A549 (cell line): ENCODE measurements at regions of chr2 and their contacts with region 1.

Region 1: GRCh38 chr2:20446917-20447436 is at the start of gene RHOB:
- DNase-seq: peak; percentile 99
- ATAC-seq: peak; percentile 76 to 85
- H3K4me3 ChIP-seq: peak within 1 kb of the TSS; percentile 90
- H3K27ac ChIP-seq: peak within 1 kb of the TSS; percentile 95 to 98
- H3K4me1 ChIP-seq: peaks cover 52% of the 10 kb centered on the region
- CTCF ChIP-seq: no peak
- EP300 ChIP-seq: no peak
- POLR2A ChIP-seq: peak; percentile 99
- RAD21 ChIP-seq: no peak; a peak in 1 of 5 replicates
- polyA plus RNA-seq, gene RHOB: 110 and 157 TPM in 2 replicates

Region 2: DNA sequence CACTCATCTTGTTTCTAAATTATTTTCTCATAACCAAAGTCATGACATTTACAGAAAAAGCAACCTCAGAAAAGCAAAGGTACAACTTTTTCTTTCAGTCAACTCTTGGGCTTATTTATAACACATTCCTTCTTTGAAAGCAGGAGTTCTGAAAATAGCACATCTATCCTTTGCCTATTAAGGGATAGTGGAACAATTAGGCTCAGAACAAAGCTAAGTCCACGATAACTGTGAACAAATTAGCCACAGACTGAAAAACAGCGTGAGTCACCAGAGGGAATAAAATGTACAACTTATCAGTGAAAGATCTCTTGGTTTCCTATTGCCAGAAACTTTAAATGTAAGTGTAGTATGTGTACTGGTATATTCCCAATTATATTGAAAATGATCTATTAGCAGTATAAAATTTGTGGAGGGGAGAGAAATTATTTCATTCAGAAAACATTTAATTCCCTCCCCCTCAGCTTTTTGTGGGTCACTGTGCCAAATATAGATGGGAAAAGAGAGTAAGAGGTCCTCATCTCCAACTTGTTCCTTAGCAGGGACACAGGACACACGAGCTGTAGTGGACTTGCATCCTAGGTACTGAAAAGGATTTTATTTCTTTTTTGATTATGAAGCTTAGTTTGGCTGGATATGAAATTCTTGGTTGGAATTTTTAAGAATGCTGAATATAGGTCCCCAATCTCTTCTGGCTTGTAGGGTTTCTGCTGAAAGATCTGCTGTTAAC is 419.1 kb before region 1 on chr2:
- CTCF ChIA-PET with region 1: no interaction called
- POLR2A ChIA-PET with region 1: no interaction called
- DNase-seq: no peak
- ATAC-seq: no peak
- H3K4me3 ChIP-seq: no peak overlapping the region
- H3K27ac ChIP-seq: peak overlapping the region; percentile 8 to 40; a peak in 4 of 6 replicates
- H3K4me1 ChIP-seq: peaks cover 13% of the 10 kb centered on the region
- CTCF ChIP-seq: no peak
- EP300 ChIP-seq: no peak
- POLR2A ChIP-seq: no peak
- RAD21 ChIP-seq: no peak

Region 3: DNA sequence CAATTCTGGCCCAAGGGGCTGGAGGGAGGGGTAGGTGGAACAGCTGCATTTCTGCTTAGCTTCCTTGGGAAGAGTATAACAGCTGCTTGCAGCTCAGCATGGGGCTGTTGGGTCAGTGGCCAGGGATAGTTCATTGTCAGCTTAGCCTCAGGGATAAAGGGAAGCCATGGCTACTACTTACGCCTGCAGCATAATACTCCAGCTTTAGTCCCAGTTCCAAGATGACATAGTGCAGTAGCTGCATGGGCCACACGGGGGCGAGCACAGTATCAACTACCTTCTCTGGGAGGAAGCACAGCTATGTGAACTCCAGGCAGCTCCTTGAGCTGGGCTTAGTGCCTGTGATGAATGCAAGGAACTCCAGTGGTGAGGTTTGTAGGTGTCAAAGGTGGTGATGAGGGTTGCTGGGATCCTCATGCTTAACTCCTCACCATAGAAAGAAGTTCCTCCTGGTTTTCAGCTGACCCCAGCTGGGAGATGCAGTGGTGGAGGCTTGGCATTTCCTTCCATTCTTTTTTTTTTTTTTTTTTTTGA is 35.5 kb before region 1 on chr2:
- CTCF ChIA-PET with region 1: interaction called, 116 read pairs
- POLR2A ChIA-PET with region 1: interaction called, 36 read pairs
- DNase-seq: peak; percentile 79 to 86
- ATAC-seq: peak; percentile 100
- H3K4me3 ChIP-seq: no peak overlapping the region
- H3K27ac ChIP-seq: no peak overlapping the region
- H3K4me1 ChIP-seq: peaks cover 4% of the 10 kb centered on the region; the same call in 1 of the 3 replicates
- CTCF ChIP-seq: peak; percentile 81
- EP300 ChIP-seq: no peak
- POLR2A ChIP-seq: no peak
- RAD21 ChIP-seq: peak; percentile 79 to 86

Region 4: GRCh38 chr2:20466417-20466911 is 19.5 kb after region 1 on chr2:
- CTCF ChIA-PET with region 1: interaction called, 7 read pairs
- POLR2A ChIA-PET with region 1: interaction called, 18 read pairs
- DNase-seq: no peak
- ATAC-seq: peak in 1 of 2 experiments; percentile 30; a peak in 2 of 6 replicates
- H3K4me3 ChIP-seq: no peak overlapping the region
- H3K27ac ChIP-seq: no peak overlapping the region
- H3K4me1 ChIP-seq: no peaks in the 10 kb centered on the region
- CTCF ChIP-seq: no peak
- EP300 ChIP-seq: no peak
- POLR2A ChIP-seq: no peak
- RAD21 ChIP-seq: no peak

Region 5: GRCh38 chr2:20501974-20502373 is 55.0 kb after region 1 on chr2:
- CTCF ChIA-PET with region 1: interaction called, 3 read pairs
- POLR2A ChIA-PET with region 1: interaction called, 16 read pairs
- DNase-seq: peak; percentile 38 to 85
- ATAC-seq: peak; percentile 66 to 93
- H3K4me3 ChIP-seq: no peak overlapping the region
- H3K27ac ChIP-seq: peak overlapping the region; percentile 77
- H3K4me1 ChIP-seq: peaks cover 21% of the 10 kb centered on the region
- CTCF ChIP-seq: no peak
- EP300 ChIP-seq: peak in 1 of 2 experiments; percentile 58; a peak in 1 of 5 replicates
- POLR2A ChIP-seq: no peak
- RAD21 ChIP-seq: 0 out of 5 replicates have a peak, but pooled peaks of 1 of the 2 experiments have one; percentile 10

Region 6: DNA sequence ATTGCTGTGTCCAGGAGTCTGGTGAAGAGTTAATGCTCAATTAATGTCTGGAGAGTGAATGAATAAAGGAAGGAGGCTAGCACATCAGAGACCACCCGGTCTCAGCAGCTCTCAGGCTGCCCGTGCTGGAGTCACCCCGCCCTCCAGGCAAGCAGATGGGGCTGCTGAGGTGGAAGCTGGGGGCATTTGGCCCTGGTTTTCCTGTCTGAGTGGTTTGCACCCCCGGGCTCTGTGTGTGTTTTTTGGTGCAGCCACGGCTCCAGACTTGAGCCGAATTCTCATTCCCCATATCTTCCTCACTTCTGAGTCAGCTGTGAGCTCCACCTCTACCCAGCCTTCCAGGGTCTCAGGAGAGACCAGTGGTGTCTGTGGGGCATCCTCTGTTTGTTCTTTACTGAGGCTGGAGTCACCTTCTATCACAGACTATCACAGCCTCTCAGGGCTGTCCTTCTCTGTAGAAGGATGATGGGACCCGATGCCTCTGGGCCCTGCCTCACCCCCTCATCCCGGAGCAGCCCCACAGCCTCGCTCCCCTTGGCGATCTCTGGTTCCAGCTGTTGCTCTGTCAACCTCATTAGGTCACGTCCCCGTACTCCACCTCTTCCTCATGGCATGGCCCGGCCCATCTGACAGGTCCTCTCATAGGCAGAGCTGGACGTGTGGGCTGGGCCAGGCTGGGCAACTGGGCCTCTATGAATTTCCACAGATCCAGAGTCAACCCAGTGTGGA is 143.2 kb after region 1 on chr2:
- CTCF ChIA-PET with region 1: interaction called, 3 read pairs
- POLR2A ChIA-PET with region 1: interaction called, 51 read pairs
- DNase-seq: no peak
- ATAC-seq: no peak
- H3K4me3 ChIP-seq: no peak overlapping the region
- H3K27ac ChIP-seq: peak overlapping the region; percentile 43 to 89; a peak in 4 of 6 replicates
- H3K4me1 ChIP-seq: peaks cover 47% of the 10 kb centered on the region
- CTCF ChIP-seq: no peak
- EP300 ChIP-seq: no peak
- POLR2A ChIP-seq: no peak
- RAD21 ChIP-seq: no peak

Region 7: GRCh38 chr2:20625491-20626391 is 178.8 kb after region 1 on chr2:
- CTCF ChIA-PET with region 1: interaction called, 210 read pairs
- POLR2A ChIA-PET with region 1: interaction called, 137 read pairs
- DNase-seq: no peak
- ATAC-seq: no peak
- H3K4me3 ChIP-seq: no peak overlapping the region
- H3K27ac ChIP-seq: no peak overlapping the region
- H3K4me1 ChIP-seq: no peaks in the 10 kb centered on the region
- CTCF ChIP-seq: no peak
- EP300 ChIP-seq: no peak
- POLR2A ChIP-seq: no peak
- RAD21 ChIP-seq: no peak

Region 8: DNA sequence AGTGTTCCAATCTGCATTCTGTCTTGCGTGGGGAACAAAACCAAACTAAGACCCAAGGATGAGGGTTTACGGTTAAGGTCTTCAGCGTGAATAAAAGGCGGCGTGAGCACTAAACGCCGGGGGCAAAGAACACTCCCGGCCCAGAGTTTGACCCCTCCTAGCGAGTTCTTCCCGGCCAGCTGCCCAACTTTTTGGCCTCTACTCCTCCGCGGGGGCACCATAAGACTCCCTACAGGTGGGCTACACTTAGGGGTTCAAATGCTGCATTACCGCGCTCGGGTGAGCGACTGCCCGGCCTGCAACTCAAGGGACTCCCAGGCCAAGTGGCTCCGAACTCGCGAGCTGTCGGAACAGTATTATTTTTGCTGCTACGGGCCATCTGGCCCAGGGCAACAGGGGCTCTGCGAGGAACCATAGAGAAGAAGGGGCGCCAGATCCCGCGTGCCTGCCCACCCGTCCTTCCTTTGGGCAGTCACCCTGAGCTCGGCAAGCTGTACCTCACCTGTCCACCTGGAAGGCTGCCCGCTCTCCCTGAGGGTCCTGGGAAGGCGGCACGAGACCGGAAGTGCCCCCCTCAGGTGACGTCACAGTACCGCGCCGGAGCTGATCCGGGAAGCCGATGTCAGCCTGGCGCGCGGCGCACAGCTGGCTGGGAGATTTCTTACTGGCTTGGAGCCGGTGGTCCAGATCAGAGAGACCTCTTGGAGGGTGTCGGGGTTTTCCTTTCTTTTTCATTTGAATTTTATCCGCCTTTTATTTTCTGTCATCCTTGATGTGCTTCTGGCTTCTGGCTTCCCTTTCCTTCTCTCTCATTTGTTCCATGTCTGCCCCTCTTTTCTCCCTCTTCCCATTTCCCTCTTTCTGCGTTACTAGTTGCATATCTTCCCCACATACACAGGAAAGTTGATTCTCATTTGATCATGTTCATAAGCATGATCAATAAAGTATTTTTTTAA is 375.8 kb after region 1 on chr2 and contains the start of gene LDAH:
- CTCF ChIA-PET with region 1: no interaction called
- POLR2A ChIA-PET with region 1: interaction called, 12 read pairs
- DNase-seq: peak; percentile 91 to 93
- ATAC-seq: peak; percentile 92 to 94
- H3K4me3 ChIP-seq: peak within 1 kb of the TSS; percentile 90
- H3K27ac ChIP-seq: peak within 1 kb of the TSS; percentile 91 to 93
- H3K4me1 ChIP-seq: no peaks in the 10 kb centered on the region
- CTCF ChIP-seq: no peak
- EP300 ChIP-seq: no peak
- POLR2A ChIP-seq: peak; percentile 78
- RAD21 ChIP-seq: no peak
- polyA plus RNA-seq, gene LDAH: 42.4 and 53.6 TPM in 2 replicates